ENCODE measurements at regions of chr16 and their contacts with region 1.

Region 1: DNA sequence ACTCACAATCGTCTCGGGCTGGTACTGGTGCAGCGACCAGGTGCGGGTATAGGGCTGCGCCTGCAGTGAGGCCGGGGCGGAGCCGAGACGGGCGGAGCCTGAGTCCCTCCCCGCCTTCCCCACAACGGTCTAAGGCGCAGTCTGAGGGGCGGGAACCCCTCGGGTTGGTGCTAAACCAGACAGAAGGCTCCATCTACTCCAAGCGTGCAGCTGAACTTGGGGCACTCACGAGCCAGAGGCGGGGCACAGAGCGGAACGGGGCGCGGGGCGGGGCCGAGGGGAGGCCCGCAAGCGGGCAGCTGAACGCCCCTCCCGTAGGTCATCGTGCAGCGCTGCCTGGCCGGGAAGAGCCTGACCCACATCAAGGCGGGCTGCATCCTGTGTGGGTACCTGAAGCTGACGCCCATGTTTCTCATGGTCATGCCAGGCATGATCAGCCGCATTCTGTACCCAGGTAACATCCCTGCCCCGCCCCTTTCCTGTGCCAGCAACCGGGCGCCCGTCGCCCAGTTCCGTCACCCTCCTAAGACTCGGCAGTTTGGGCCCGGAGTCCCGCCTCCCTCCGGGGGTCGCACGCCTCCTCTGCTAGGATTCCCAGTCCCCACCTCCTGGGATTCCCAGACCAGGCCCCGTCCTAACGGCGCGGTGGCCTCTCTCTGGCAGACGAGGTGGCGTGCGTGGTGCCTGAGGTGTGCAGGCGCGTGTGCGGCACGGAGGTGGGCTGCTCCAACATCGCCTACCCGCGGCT is 5.0 kb downstream of the SLC5A2 start:
- DNase-seq: peak; percentile 70 to 83 (median 78)
- H3K4me3 ChIP-seq: peak overlapping the region; percentile 87
- H3K4me3 Mint-ChIP-seq: peak overlapping the region; percentile 90 to 93 (median 91)
- H3K27ac ChIP-seq: peak overlapping the region; percentile 24
- H3K27ac Mint-ChIP-seq: peak overlapping the region; percentile 64 to 95 (median 84)
- H3K4me1 ChIP-seq: peaks cover 14% of the 10 kb centered on the region
- H3K4me1 Mint-ChIP-seq: peaks cover 4 to 17% (median 13%) of the 10 kb centered on the region in 3 donors
- H3K27me3 ChIP-seq: no peaks in the 10 kb centered on the region
- H3K27me3 Mint-ChIP-seq: no peaks in the 10 kb centered on the region

Region 2: GRCh38 chr16:31476303-31477219 is 11.3 kb before region 1 on chr16:
- CTCF ChIA-PET with region 1: interaction called, 3 read pairs
- POLR2A ChIA-PET with region 1: interaction called, 16 read pairs
- DNase-seq: peak; percentile 72 to 91 (median 82)
- H3K4me3 ChIP-seq: peak overlapping the region; percentile 70
- H3K4me3 Mint-ChIP-seq: peak overlapping the region; percentile 63 to 94 (median 88)
- H3K27ac ChIP-seq: peak overlapping the region; percentile 51
- H3K27ac Mint-ChIP-seq: peak overlapping the region in 5 of 8 donors; percentile 37 to 78 (median 63)
- H3K4me1 ChIP-seq: peaks cover 6% of the 10 kb centered on the region
- H3K4me1 Mint-ChIP-seq: peaks cover 6 to 29% (median 17%) of the 10 kb centered on the region in 3 donors
- H3K27me3 ChIP-seq: peaks cover 9% of the 10 kb centered on the region
- H3K27me3 Mint-ChIP-seq: peaks cover 13 to 21% of the 10 kb centered on the region in 2 donors

Region 3: DNA sequence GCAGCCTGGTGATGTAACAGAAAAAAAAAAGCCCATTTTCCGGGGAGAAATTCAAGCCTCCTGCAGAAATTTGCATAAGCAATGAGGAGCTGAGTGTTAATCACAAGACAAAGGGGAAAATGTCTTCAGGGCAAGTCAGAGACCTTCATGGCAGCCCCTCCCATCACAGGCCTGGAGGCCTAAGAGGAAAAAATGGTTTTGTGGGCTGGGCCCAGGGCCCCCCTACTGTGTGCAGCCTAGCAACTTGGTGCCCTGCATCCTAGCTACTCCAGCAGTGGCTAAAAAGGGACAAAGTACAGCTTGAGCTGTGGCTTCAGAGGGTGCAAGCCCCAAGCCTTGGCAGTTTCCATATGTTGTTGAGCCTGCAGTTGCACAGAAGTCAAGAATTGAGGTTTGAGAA is 89.5 kb after region 1 on chr16:
- CTCF ChIA-PET with region 1: no interaction called
- POLR2A ChIA-PET with region 1: no interaction called
- DNase-seq: no peak
- H3K4me3 ChIP-seq: no peak overlapping the region
- H3K4me3 Mint-ChIP-seq: no peak overlapping the region
- H3K27ac ChIP-seq: no peak overlapping the region
- H3K27ac Mint-ChIP-seq: no peak overlapping the region
- H3K4me1 ChIP-seq: no peaks in the 10 kb centered on the region
- H3K4me1 Mint-ChIP-seq: no peaks in the 10 kb centered on the region
- H3K27me3 ChIP-seq: no peaks in the 10 kb centered on the region
- H3K27me3 Mint-ChIP-seq: peaks cover 17 to 28% of the 10 kb centered on the region in 2 donors